IMR-90 (cell line): ENCODE measurements at regions of chr2 and their contacts with region 1.

Region 1: DNA sequence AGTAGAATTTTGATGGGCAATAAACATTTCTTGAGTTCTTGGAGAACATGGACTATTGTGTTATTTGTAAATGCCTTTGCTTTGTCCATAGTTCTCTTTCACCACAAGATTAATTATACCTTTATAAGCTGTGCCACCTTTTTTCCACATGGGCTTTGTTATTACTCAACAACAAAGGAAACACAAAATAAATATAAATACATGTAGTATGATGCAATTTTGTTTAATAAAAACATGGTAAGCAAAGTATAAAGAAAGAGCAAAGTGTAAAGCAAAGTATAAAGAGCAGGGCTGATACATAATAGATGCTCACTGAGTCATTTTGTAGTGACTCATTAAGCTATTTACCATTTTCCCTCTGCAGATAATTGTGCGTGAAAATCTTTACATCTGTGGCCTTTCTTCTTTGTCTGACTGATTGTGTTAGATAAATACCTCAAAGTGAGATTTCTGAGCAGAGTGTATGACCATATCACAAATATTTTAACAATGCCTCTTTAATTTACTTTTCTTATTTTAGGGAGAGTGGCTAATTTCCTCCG is 80.9 kb downstream of the CERS6 start:
- DNase-seq: no peak
- ATAC-seq: peak; percentile 62
- H3K4me3 ChIP-seq: no peak overlapping the region
- H3K27ac ChIP-seq: no peak overlapping the region
- H3K4me1 ChIP-seq: no peaks in the 10 kb centered on the region; the same call in 1 of the 2 replicates
- H3K27me3 ChIP-seq: no peaks in the 10 kb centered on the region
- CTCF ChIP-seq: no peak
- POLR2A ChIP-seq: no peak
- RAD21 ChIP-seq: no peak

Region 2: DNA sequence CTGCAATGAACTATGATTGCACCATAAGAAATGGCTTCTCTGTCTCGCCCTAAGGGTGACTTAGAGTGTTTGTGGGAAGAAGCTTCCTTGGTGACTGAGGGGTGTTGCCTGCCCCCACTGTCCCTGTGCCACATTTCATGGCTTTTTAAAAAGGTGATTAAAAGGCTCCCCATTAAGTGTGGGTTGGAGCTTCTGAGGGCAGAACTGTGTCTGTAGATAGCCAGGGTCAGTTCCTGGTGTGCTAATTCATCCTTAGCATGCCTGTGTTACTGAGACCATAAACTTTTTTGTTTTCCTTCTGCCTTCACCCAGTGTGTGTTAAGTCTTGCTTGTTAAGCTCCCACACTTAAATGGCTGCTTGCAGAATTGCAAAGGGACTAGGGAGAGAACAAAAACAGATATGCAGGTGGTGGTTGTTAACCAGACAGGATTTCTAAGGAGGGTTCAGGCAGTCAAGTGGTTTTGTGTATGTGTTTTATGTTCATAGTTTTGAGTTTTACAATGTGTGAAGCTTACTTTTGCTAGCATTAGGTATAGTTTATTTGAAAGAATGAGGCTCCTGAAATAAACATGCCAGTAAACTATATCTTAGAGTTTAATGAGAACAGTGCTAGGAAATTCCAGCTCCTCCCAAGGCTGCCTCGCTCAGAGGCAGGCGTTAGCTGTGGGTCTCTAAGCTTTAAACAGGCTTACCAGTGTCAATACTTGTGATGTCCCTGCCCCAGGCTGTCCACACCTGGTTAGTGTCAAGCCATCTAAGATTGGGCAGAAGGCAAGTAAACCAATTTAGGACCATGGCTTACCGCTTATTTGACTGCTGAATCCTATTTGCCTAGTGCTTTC is 66.5 kb before region 1 on chr2:
- CTCF ChIA-PET with region 1: interaction called, 12 read pairs
- POLR2A ChIA-PET with region 1: no interaction called
- dilution Hi-C with region 1: no loop called
- in situ Hi-C with region 1: no loop called
- intact Hi-C with region 1: no loop called
- DNase-seq: no peak
- ATAC-seq: no peak
- H3K4me3 ChIP-seq: no peak overlapping the region
- H3K27ac ChIP-seq: no peak overlapping the region
- H3K4me1 ChIP-seq: no peaks in the 10 kb centered on the region
- H3K27me3 ChIP-seq: no peaks in the 10 kb centered on the region
- CTCF ChIP-seq: no peak
- POLR2A ChIP-seq: no peak
- RAD21 ChIP-seq: no peak

Region 3: GRCh38 chr2:168573128-168573903 is 36.3 kb after region 1 on chr2:
- CTCF ChIA-PET with region 1: no interaction called
- POLR2A ChIA-PET with region 1: no interaction called
- dilution Hi-C with region 1: no loop called
- in situ Hi-C with region 1: no loop called
- intact Hi-C with region 1: no loop called
- DNase-seq: peak; percentile 34
- ATAC-seq: no peak; the same call in 1 of the 2 replicates
- H3K4me3 ChIP-seq: no peak overlapping the region
- H3K27ac ChIP-seq: no peak overlapping the region
- H3K4me1 ChIP-seq: no peaks in the 10 kb centered on the region
- H3K27me3 ChIP-seq: no peaks in the 10 kb centered on the region
- CTCF ChIP-seq: no peak
- POLR2A ChIP-seq: no peak
- RAD21 ChIP-seq: no peak